Activated CD8-positive, alpha-beta T cell treated with anti-CD3 and anti-CD28 coated beads for 36 hours (primary cell): ENCODE measurements at regions of chr2 and their contacts with region 1.

Region 1: GRCh38 chr2:222057347-222058073 is 241.3 kb downstream of the PAX3 start:
- DNase-seq: no peak
- ATAC-seq: no peak
- H3K4me3 Mint-ChIP-seq: no peak overlapping the region
- H3K27ac Mint-ChIP-seq: no peak overlapping the region
- H3K4me1 Mint-ChIP-seq: no peaks in the 10 kb centered on the region
- H3K27me3 Mint-ChIP-seq: peaks cover 19% of the 10 kb centered on the region
- CTCF ChIP-seq: peak; percentile 72

Region 2: GRCh38 chr2:222305516-222306392 is 248.2 kb after region 1 on chr2:
- CTCF ChIA-PET with region 1: no interaction called
- POLR2A ChIA-PET with region 1: no interaction called
- intact Hi-C with region 1: loop called (anchors 10 kb)
- DNase-seq: no peak
- ATAC-seq: no peak
- H3K4me3 Mint-ChIP-seq: peak overlapping the region; percentile 55
- H3K27ac Mint-ChIP-seq: no peak overlapping the region
- H3K4me1 Mint-ChIP-seq: peaks cover 23% of the 10 kb centered on the region
- H3K27me3 Mint-ChIP-seq: peaks cover 92% of the 10 kb centered on the region
- CTCF ChIP-seq: no peak

Region 3: GRCh38 chr2:222561817-222562645 is 504.5 kb after region 1 on chr2:
- CTCF ChIA-PET with region 1: interaction called, 9 read pairs
- POLR2A ChIA-PET with region 1: interaction called, 4 read pairs
- intact Hi-C with region 1: loop called (anchors 10 kb)
- DNase-seq: peak; percentile 40
- ATAC-seq: peak; percentile 76
- H3K4me3 Mint-ChIP-seq: no peak overlapping the region
- H3K27ac Mint-ChIP-seq: no peak overlapping the region
- H3K4me1 Mint-ChIP-seq: no peaks in the 10 kb centered on the region
- H3K27me3 Mint-ChIP-seq: no peaks in the 10 kb centered on the region
- CTCF ChIP-seq: peak; percentile 34